Panc1 (cell line): ENCODE measurements at regions of chr1 and their contacts with region 1.

Region 1: DNA sequence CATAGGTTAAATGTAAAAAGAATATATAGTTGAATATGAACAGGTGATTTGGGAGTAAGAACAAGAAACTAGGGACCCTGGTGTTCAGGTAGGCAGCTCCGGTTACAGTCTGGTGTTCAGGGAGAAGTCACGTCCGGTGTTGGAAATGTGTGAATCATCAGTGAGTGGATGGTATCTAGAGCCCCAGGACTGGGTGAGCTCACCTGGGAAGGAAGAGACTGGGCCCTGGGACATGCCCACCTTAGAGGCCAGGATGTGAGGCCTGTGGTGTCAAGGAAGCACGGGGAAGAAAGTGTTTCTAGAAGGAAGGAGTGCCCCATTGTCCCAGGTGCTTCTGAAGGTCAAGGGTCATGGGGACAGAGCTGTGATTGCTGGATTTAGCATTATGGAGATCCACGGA is 1.5 kb upstream of the GJB3 start:
- DNase-seq: no peak
- ATAC-seq: no peak
- H3K4me3 ChIP-seq: no peak overlapping the region
- H3K27ac ChIP-seq: no peak overlapping the region
- H3K4me1 ChIP-seq: peaks cover 5% of the 10 kb centered on the region; the same call in 1 of the 2 replicates
- H3K27me3 ChIP-seq: peaks cover 3% of the 10 kb centered on the region
- CTCF ChIP-seq: no peak

Region 2: GRCh38 chr1:34721646-34722355 is 57.7 kb before region 1 on chr1:
- CTCF ChIA-PET with region 1: no interaction called
- POLR2A ChIA-PET with region 1: no interaction called
- in situ Hi-C with region 1: no loop called
- intact Hi-C with region 1: no loop called
- DNase-seq: no peak
- ATAC-seq: no peak
- H3K4me3 ChIP-seq: no peak overlapping the region
- H3K27ac ChIP-seq: no peak overlapping the region
- H3K4me1 ChIP-seq: no peaks in the 10 kb centered on the region
- H3K27me3 ChIP-seq: peaks cover 14% of the 10 kb centered on the region
- CTCF ChIP-seq: no peak

Region 3: GRCh38 chr1:34758751-34759150 is 20.8 kb before region 1 on chr1:
- CTCF ChIA-PET with region 1: no interaction called
- POLR2A ChIA-PET with region 1: interaction called, 13 read pairs
- in situ Hi-C with region 1: no loop called
- intact Hi-C with region 1: no loop called
- DNase-seq: no peak
- ATAC-seq: no peak
- H3K4me3 ChIP-seq: no peak overlapping the region
- H3K27ac ChIP-seq: no peak overlapping the region
- H3K4me1 ChIP-seq: no peaks in the 10 kb centered on the region; the same call in 1 of the 2 replicates
- H3K27me3 ChIP-seq: no peaks in the 10 kb centered on the region
- CTCF ChIP-seq: no peak

Region 4: DNA sequence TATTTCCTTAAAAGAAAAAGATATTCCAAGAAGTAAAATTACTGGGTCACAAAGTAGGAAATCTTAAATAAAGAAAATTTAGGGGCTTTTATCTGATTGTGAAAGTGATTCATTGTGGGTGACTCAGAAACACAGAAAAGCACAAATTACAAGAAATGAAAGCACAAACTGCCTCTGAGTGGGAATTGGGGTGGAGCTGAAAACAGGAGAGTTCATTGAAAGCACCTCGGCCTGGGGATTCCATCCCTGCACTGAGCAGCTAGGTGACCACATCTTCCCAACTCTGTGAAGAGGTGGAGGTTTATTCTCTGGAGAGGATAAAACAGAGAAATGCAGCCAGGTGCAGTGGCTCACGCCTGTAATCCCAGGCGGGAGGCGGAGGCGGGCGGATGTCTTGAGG is 20.7 kb after region 1 on chr1:
- CTCF ChIA-PET with region 1: no interaction called
- POLR2A ChIA-PET with region 1: no interaction called
- in situ Hi-C with region 1: no loop called
- intact Hi-C with region 1: no loop called
- DNase-seq: no peak
- ATAC-seq: no peak
- H3K4me3 ChIP-seq: no peak overlapping the region
- H3K27ac ChIP-seq: no peak overlapping the region
- H3K4me1 ChIP-seq: no peaks in the 10 kb centered on the region
- H3K27me3 ChIP-seq: no peaks in the 10 kb centered on the region
- CTCF ChIP-seq: no peak